ENCODE measurements at regions of chr5 and their contacts with region 1.

Region 1: GRCh38 chr5:93874080-93874479 is 132.7 kb upstream of the POU5F2 start:
- DNase-seq: no peak
- H3K4me3 ChIP-seq: no peak overlapping the region
- H3K27ac ChIP-seq: no peak overlapping the region
- H3K4me1 ChIP-seq: no peaks in the 10 kb centered on the region
- H3K27me3 ChIP-seq: no peaks in the 10 kb centered on the region
- CTCF ChIP-seq: no peak
- POLR2A ChIP-seq: no peak

Region 2: DNA sequence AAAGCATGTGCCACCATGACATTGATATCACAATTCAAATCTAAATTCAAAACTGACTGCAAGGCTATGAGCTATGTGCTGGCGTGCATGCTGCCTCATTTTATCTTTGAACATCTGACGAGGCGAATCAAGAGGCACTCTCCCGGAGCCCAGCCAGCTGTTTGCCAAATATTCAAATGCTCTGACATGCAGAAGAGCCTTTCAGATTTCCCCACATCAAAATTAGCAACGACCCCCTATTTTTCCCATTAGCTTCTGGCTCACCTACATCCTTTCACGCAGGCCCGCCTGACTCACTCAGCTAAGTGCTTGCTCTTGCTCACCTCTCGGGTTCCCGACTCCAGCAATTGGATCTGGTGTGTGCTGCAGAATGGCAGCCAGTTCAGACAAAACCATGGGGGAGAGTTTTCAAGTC is 452.1 kb before region 1 on chr5:
- intact Hi-C with region 1: loop called (anchors 10 kb)
- DNase-seq: no peak
- H3K4me3 ChIP-seq: no peak overlapping the region
- H3K27ac ChIP-seq: no peak overlapping the region
- H3K4me1 ChIP-seq: no peaks in the 10 kb centered on the region
- H3K27me3 ChIP-seq: no peaks in the 10 kb centered on the region
- CTCF ChIP-seq: no peak
- POLR2A ChIP-seq: no peak

Region 3: DNA sequence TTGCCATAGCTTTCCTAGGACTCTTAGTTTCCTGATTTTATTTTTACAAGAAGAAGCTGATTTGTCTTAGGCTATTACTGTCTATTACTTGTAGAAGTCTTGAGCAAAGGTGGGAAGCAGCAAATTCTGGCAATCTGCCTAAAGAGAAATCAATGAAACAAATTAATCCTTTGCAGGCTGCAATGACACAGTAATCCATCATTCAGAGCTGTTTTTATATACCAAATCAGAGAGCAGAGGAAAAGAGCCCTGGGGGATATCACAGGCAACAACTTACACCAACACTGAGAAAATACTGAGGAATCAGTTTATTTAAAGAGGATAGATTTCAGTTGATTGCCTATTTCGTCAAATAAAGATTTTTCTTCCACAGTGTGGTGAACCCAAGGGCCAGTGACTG is 306.7 kb before region 1 on chr5:
- intact Hi-C with region 1: no loop called
- DNase-seq: no peak
- H3K4me3 ChIP-seq: no peak overlapping the region
- H3K27ac ChIP-seq: no peak overlapping the region
- H3K4me1 ChIP-seq: no peaks in the 10 kb centered on the region
- H3K27me3 ChIP-seq: no peaks in the 10 kb centered on the region
- CTCF ChIP-seq: no peak
- POLR2A ChIP-seq: no peak